CD14-positive monocyte (primary cell): ENCODE measurements at regions of chr6 and their contacts with region 1.

Region 1: DNA sequence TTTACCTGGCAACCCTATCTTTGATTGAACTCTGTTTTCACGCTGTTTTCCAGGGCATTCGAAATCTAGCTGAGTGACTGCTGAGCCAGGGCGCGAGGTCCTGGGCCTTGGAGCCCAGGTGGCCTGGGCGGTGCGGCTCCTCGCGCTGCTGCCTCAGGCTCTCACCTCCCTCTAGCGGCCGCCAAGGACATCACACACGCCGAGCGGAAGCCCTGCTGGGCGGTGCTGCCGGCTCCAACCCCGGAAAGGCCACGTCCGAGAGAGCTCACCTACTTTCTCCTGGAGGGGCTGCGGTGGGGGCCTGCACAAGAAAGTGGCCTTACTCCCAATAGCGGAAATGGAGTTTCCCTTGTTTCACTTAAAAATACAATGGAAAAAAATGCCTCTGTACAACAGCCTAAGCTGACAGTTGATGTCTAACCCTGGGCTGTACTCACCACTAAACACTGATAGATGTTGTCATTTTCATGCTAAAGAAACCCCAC is 77.7 kb downstream of the ELOVL4 start:
- DNase-seq: peak; percentile 62 to 73 (median 72)
- H3K4me3 ChIP-seq: peak overlapping the region in 2 of 3 experiments; percentile 18 to 64
- H3K4me3 Mint-ChIP-seq: peak overlapping the region; percentile 56 to 78
- H3K27ac ChIP-seq: no peak overlapping the region
- H3K27ac Mint-ChIP-seq: peak overlapping the region in 1 of 7 donors; percentile 33
- H3K4me1 ChIP-seq: peaks cover 21 to 32% of the 10 kb centered on the region in 2 donors
- H3K4me1 Mint-ChIP-seq: peaks cover 33% of the 10 kb centered on the region
- H3K27me3 ChIP-seq: no peaks in the 10 kb centered on the region
- H3K27me3 Mint-ChIP-seq: peaks cover 0 to 6% (median 2%) of the 10 kb centered on the region in 3 donors
- CTCF ChIP-seq: peak; percentile 99

Region 2: DNA sequence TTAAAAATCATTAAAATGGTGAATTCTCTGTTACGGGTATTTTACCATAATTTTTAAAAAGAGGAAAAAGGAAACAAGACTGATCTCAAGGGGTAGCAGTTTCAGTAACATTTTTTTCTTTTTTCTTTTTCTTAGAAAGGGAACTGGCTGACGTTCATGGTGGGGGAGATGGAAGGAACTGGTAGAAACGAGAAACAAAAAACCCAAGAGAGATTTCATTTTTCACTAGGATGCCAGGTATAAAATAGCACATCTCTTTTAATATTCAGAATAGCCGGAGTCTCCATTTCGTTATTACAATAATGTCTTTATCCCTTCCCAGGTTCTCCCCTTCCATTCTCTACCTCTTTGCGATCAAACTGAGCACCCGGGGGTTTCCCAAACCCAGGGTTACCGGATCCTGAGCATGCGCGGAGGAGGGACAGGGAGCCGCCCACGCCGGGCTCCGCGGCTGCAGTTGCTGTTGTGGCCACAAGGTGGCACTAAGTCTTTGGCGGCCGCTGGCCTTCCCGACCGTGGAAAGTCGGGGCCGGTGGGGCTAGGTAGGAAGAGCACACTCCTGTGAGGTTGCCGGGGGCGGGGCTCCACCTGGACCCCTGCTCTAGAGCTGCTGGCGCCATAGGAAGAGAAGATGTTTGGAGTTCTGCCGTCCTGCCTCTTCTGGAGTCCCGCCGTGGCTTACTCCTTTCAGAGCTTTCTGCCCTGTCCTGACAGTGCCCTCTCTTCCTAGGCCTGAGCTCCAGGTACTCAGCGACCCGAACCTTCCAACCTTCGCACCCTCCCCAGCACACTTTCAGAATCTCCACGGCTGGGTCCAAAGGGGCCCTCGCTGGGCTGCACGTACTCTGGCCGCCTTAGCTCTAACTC is 91.7 kb before region 1 on chr6:
- intact Hi-C with region 1: loop called (anchors 1 to 5 kb)
- DNase-seq: peak; percentile 65 to 83 (median 78)
- H3K4me3 ChIP-seq: peak overlapping the region; percentile 2 to 71 (median 12)
- H3K4me3 Mint-ChIP-seq: peak overlapping the region; percentile 76 to 88
- H3K27ac ChIP-seq: no peak overlapping the region
- H3K27ac Mint-ChIP-seq: peak overlapping the region in 6 of 7 donors; percentile 6 to 82 (median 42)
- H3K4me1 ChIP-seq: peaks cover 13% of the 10 kb centered on the region in 2 donors
- H3K4me1 Mint-ChIP-seq: peaks cover 13% of the 10 kb centered on the region
- H3K27me3 ChIP-seq: no peaks in the 10 kb centered on the region
- H3K27me3 Mint-ChIP-seq: peaks cover 2 to 8% (median 3%) of the 10 kb centered on the region in 3 donors
- CTCF ChIP-seq: peak; percentile 95

Region 3: DNA sequence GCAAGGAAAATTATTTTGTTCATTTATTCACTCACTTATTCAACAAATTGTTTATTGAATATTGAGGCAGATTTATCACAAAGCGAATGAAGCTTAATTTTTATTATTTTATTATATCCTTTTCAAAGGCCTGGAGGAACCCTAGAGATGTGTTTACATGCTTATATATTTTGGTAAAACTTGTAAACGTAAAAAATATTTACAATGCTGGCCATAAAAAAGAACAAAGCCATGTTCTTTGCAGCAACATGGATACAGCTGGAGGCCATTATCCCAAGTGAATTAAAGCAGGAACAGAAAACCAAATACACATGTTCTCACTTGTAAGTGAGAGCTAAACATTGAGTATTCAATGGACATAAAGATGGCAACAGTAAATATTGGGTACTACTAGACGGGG is 18.9 kb after region 1 on chr6:
- intact Hi-C with region 1: no loop called
- DNase-seq: no peak
- H3K4me3 ChIP-seq: no peak overlapping the region
- H3K4me3 Mint-ChIP-seq: no peak overlapping the region
- H3K27ac ChIP-seq: no peak overlapping the region
- H3K27ac Mint-ChIP-seq: no peak overlapping the region
- H3K4me1 ChIP-seq: no peaks in the 10 kb centered on the region
- H3K4me1 Mint-ChIP-seq: no peaks in the 10 kb centered on the region
- H3K27me3 ChIP-seq: peaks cover 0 to 2% of the 10 kb centered on the region in 2 donors
- H3K27me3 Mint-ChIP-seq: peaks cover 5 to 14% (median 7%) of the 10 kb centered on the region in 3 donors
- CTCF ChIP-seq: no peak